Naive thymus-derived CD4-positive, alpha-beta T cell (primary cell): ENCODE measurements at regions of chr9 and their contacts with region 1.

Region 1: DNA sequence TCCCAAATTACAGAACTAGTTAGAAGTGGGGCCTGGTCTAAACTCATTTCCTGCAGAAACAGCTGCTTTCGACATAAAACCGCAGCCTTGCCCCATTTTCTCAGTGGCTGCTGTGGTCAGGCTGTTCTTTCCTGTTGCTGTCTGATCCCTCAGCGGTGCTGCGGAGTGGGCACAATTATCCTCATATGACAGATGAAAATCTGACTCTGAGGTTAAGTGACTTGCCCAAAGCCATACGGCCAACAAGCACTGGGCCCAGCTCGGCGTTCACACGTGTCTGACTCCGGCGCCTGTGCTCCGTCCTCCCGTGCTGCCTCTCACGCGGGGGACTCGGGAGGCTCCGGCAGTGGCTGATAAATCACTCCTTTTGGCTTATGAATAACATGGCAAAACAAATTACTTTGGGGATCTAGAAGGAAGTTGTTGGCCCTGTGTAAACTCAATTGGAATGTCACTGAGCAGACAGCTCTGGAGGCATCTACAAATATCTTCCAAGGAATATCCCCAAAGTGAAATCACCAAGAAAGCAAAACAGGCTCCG is 142.6 kb upstream of the LMX1B start:
- DNase-seq: peak; percentile 39 to 80 (median 66)
- ATAC-seq: peak; percentile 90
- H3K4me3 ChIP-seq: peak overlapping the region; percentile 6
- H3K4me3 Mint-ChIP-seq: peak overlapping the region; percentile 75 to 85 (median 82)
- H3K27ac ChIP-seq: peak overlapping the region; percentile 40
- H3K27ac Mint-ChIP-seq: peak overlapping the region; percentile 76 to 94 (median 88)
- H3K4me1 ChIP-seq: peaks cover 51 to 61% of the 10 kb centered on the region in 2 donors
- H3K4me1 Mint-ChIP-seq: peaks cover 56 to 83% (median 75%) of the 10 kb centered on the region in 7 donors
- H3K27me3 ChIP-seq: no peaks in the 10 kb centered on the region
- H3K27me3 Mint-ChIP-seq: peaks cover 0 to 58% (median 0%) of the 10 kb centered on the region in 5 donors

Region 2: GRCh38 chr9:126326228-126327005 is 144.7 kb before region 1 on chr9 and contains the start of gene MVB12B:
- CTCF ChIA-PET with region 1: interaction called, 4 read pairs
- POLR2A ChIA-PET with region 1: no interaction called
- intact Hi-C with region 1: loop called in 1 of 2 experiments (anchors 5 kb)
- DNase-seq: peak; percentile 37 to 67 (median 57)
- ATAC-seq: peak; percentile 89
- H3K4me3 ChIP-seq: peak within 1 kb of the TSS; percentile 46
- H3K4me3 Mint-ChIP-seq: peak within 1 kb of the TSS; percentile 73 to 89 (median 87)
- H3K27ac ChIP-seq: peak within 1 kb of the TSS; percentile 59
- H3K27ac Mint-ChIP-seq: peak within 1 kb of the TSS; percentile 70 to 89 (median 84)
- H3K4me1 ChIP-seq: peaks cover 4 to 41% of the 10 kb centered on the region in 2 donors
- H3K4me1 Mint-ChIP-seq: peaks cover 7 to 39% (median 14%) of the 10 kb centered on the region in 7 donors
- H3K27me3 ChIP-seq: no peaks in the 10 kb centered on the region
- H3K27me3 Mint-ChIP-seq: peaks cover 0 to 42% (median 0%) of the 10 kb centered on the region in 5 donors
- total RNA-seq, gene MVB12B: 3.0 to 9.7 (median 4.2) TPM

Region 3: DNA sequence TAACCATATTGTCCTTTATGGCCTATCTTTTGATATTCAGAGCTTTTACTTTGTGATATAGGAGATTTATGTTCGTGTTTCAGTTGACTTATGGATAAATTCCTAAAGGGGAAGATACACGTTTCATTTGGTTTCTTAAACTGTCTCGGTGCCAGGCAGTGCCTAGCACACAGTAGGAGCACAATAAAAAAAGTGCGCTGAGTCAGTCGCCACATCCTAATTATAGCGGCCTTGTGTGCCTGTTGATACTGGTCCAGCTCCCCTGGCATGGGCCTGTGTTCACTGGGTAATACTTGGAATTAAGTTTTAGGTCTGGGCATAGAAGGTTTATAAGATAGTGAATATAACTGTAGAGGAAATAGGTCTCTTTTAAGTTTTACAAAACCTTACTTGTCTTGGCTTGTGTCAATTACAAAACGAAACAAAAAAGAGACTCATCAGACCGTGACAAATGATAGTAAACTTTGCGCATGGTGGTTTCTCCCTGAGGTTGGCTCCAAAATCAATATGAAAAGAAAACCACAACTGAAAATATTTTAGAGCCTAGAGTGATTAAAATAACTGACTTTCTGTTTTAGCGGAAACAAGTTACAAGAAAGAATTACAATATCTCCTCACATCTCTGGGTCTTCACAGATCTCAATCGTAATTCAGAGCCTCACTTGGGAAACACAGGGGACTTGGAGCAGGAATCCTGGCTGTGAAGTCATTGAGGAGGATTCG is 59.8 kb before region 1 on chr9:
- CTCF ChIA-PET with region 1: interaction called, 3 read pairs
- POLR2A ChIA-PET with region 1: no interaction called
- intact Hi-C with region 1: loop called (anchors 1 kb)
- DNase-seq: peak in 7 of 9 donors; percentile 64 to 88 (median 78)
- ATAC-seq: peak; percentile 90
- H3K4me3 ChIP-seq: peak overlapping the region; percentile 57
- H3K4me3 Mint-ChIP-seq: peak overlapping the region; percentile 70 to 88 (median 83)
- H3K27ac ChIP-seq: peak overlapping the region; percentile 64
- H3K27ac Mint-ChIP-seq: peak overlapping the region; percentile 80 to 95 (median 89)
- H3K4me1 ChIP-seq: peaks cover 24 to 27% of the 10 kb centered on the region in 2 donors
- H3K4me1 Mint-ChIP-seq: peaks cover 31 to 54% (median 45%) of the 10 kb centered on the region in 7 donors
- H3K27me3 ChIP-seq: no peaks in the 10 kb centered on the region
- H3K27me3 Mint-ChIP-seq: peaks cover 0 to 2% (median 0%) of the 10 kb centered on the region in 5 donors

Region 4: GRCh38 chr9:126440940-126441339 is 30.2 kb before region 1 on chr9:
- CTCF ChIA-PET with region 1: no interaction called
- POLR2A ChIA-PET with region 1: interaction called, 3 read pairs
- intact Hi-C with region 1: loop called in 1 of 2 experiments (anchors 2 kb)
- DNase-seq: no peak
- ATAC-seq: no peak
- H3K4me3 ChIP-seq: no peak overlapping the region
- H3K4me3 Mint-ChIP-seq: no peak overlapping the region
- H3K27ac ChIP-seq: no peak overlapping the region
- H3K27ac Mint-ChIP-seq: no peak overlapping the region
- H3K4me1 ChIP-seq: no peaks in the 10 kb centered on the region
- H3K4me1 Mint-ChIP-seq: peaks cover 3 to 17% (median 11%) of the 10 kb centered on the region in 7 donors
- H3K27me3 ChIP-seq: no peaks in the 10 kb centered on the region
- H3K27me3 Mint-ChIP-seq: peaks cover 0 to 12% (median 0%) of the 10 kb centered on the region in 5 donors

Region 5: DNA sequence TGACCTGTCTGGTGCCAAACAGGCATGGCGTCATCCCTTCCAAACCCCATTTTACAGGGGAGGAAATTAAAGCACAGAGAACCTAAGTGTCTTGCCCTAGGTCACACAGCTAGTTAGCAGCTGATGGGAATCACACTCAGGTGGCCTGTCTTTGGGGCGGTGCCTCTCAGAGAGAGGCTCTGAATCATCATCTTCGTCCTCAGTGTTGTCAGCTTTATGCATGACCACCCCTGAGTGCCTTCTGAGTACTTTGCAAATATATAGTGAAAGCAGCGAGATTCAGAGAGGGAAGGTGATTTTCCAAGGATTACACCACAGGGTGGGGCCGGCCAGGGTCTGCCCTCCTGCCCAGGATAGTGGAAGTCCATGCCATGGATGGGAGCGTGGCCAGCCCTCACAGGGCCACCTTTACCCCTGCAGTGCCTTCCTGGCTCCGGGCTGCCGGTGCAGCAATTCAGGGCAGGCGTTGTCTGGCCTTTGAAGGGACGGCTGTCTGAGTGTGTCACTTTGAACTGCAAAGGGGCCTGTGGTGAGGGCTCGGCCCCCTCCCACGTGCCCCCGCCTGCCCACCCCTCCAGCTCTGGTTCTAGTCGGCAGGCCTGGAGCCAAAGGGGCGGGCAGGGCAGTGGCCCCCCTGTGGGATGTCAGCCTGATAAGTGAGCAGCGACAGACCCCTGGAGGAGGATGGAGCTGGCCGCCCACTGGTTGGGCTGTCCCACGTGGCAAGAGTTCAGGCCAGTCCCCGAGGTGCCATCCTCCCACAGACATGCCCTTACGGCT is 159.5 kb after region 1 on chr9:
- CTCF ChIA-PET with region 1: no interaction called
- POLR2A ChIA-PET with region 1: no interaction called
- intact Hi-C with region 1: no loop called
- DNase-seq: no peak
- ATAC-seq: no peak
- H3K4me3 ChIP-seq: no peak overlapping the region
- H3K4me3 Mint-ChIP-seq: no peak overlapping the region
- H3K27ac ChIP-seq: no peak overlapping the region
- H3K27ac Mint-ChIP-seq: no peak overlapping the region
- H3K4me1 ChIP-seq: no peaks in the 10 kb centered on the region
- H3K4me1 Mint-ChIP-seq: peaks cover 0 to 10% (median 6%) of the 10 kb centered on the region in 7 donors
- H3K27me3 ChIP-seq: peaks cover 7 to 16% of the 10 kb centered on the region in 2 donors
- H3K27me3 Mint-ChIP-seq: peaks cover 53 to 80% (median 71%) of the 10 kb centered on the region in 5 donors